ENCODE measurements at regions of chr14 and their contacts with region 1.

Region 1: DNA sequence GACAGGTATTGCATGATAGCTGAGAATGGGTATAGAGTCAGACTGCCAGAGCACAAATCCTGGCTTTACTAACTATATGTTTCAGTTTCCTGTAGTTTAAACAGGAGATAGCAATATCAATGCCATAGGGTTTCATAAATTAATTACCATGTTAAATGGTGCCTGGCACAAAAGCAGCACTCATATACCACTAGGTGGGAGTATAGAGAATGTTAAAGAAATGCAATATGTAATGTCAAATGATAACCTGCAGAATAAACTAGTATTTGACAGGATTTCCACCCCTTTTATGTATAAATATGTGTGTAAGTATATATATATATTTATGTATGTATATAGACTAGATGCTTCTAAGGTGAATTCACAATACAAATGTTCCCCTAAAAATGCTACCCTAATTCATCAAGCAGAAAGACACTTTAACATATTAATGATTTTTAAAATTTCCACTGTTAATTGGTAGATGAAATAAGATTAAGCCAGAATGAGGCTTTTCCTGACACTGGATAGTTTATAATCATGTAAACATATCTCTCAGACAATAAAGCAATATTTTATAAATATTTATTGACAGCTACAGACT is 8.6 kb downstream of the WDR89 start:
- DNase-seq: no peak
- H3K4me3 ChIP-seq: no peak overlapping the region
- H3K27ac ChIP-seq: no peak overlapping the region
- H3K4me1 ChIP-seq: no peaks in the 10 kb centered on the region
- H3K27me3 ChIP-seq: no peaks in the 10 kb centered on the region
- CTCF ChIP-seq: peak; percentile 49

Region 2: GRCh38 chr14:63770187-63770807 is 137.3 kb after region 1 on chr14:
- intact Hi-C with region 1: loop called (anchors 5 kb)
- DNase-seq: peak; percentile 55
- H3K4me3 ChIP-seq: no peak overlapping the region
- H3K27ac ChIP-seq: no peak overlapping the region
- H3K4me1 ChIP-seq: no peaks in the 10 kb centered on the region
- H3K27me3 ChIP-seq: no peaks in the 10 kb centered on the region
- CTCF ChIP-seq: peak; percentile 66

Measured in colonic mucosa (tissue), 4 donors.